ENCODE measurements at regions of chr11 and their contacts with region 1.

Region 1: GRCh38 chr11:12043959-12044819 is 35.8 kb upstream of the DKK3 start:
- DNase-seq: peak; percentile 86 to 90
- H3K4me3 ChIP-seq: peak overlapping the region in 1 of 2 donors; percentile 1
- H3K27ac ChIP-seq: peak overlapping the region; percentile 63 to 91
- H3K4me1 ChIP-seq: no peaks in the 10 kb centered on the region
- H3K27me3 ChIP-seq: no peaks in the 10 kb centered on the region
- CTCF ChIP-seq: peak; percentile 89 to 96 (median 95)
- POLR2A ChIP-seq: no peak

Region 2: GRCh38 chr11:10255388-10256125 is 1788.6 kb before region 1 on chr11:
- intact Hi-C with region 1: no loop called
- DNase-seq: no peak
- H3K4me3 ChIP-seq: no peak overlapping the region
- H3K27ac ChIP-seq: no peak overlapping the region
- H3K4me1 ChIP-seq: no peaks in the 10 kb centered on the region
- H3K27me3 ChIP-seq: no peaks in the 10 kb centered on the region
- CTCF ChIP-seq: no peak
- POLR2A ChIP-seq: no peak

Region 3: GRCh38 chr11:11806586-11806985 is 237.6 kb before region 1 on chr11:
- intact Hi-C with region 1: loop called (anchors 10 kb)
- DNase-seq: no peak
- H3K4me3 ChIP-seq: no peak overlapping the region
- H3K27ac ChIP-seq: no peak overlapping the region
- H3K4me1 ChIP-seq: no peaks in the 10 kb centered on the region
- H3K27me3 ChIP-seq: no peaks in the 10 kb centered on the region
- CTCF ChIP-seq: no peak
- POLR2A ChIP-seq: no peak

Region 4: DNA sequence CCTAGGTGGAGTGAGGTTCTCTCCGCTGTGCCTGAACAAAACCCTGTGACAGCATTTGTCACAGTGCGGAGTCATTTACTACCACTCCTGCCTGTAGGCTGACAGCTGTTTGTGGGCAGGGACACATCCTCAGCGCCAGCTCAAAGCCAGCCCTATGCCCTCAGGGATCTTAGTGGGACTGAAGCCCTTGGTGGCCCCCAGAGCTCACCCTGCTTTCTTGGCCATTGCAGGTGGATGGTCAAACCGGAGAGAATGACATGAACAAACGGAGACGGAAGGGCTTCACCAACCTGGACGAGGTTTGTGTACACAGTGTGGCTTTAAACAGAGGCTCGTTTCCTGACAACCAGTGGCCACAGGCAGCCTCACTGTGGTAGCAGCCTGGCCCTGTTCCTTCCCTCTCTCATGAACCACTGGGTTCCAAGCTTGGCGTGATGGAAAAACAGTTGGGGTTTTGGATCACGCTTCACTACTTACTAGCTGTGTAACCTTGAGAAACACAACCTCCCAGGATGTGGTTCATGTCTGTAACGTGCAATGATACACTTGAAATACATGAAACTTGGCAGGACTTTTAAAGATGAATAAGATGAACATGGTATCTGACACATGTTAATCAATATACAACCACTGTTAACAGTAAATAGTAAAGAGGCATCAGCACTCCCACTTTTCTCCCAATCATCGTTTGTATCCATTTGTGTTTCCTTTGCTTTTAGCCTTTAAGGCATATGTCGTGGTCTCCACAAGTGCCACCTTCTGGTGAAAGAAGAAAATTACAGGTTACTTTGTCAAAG is 192.0 kb after region 1 on chr11:
- intact Hi-C with region 1: loop called (anchors 5 kb)
- DNase-seq: no peak
- H3K4me3 ChIP-seq: no peak overlapping the region
- H3K27ac ChIP-seq: peak overlapping the region; percentile 71 to 77
- H3K4me1 ChIP-seq: no peaks in the 10 kb centered on the region
- H3K27me3 ChIP-seq: no peaks in the 10 kb centered on the region
- CTCF ChIP-seq: peak; percentile 50 to 79 (median 70)
- POLR2A ChIP-seq: no peak

Region 5: DNA sequence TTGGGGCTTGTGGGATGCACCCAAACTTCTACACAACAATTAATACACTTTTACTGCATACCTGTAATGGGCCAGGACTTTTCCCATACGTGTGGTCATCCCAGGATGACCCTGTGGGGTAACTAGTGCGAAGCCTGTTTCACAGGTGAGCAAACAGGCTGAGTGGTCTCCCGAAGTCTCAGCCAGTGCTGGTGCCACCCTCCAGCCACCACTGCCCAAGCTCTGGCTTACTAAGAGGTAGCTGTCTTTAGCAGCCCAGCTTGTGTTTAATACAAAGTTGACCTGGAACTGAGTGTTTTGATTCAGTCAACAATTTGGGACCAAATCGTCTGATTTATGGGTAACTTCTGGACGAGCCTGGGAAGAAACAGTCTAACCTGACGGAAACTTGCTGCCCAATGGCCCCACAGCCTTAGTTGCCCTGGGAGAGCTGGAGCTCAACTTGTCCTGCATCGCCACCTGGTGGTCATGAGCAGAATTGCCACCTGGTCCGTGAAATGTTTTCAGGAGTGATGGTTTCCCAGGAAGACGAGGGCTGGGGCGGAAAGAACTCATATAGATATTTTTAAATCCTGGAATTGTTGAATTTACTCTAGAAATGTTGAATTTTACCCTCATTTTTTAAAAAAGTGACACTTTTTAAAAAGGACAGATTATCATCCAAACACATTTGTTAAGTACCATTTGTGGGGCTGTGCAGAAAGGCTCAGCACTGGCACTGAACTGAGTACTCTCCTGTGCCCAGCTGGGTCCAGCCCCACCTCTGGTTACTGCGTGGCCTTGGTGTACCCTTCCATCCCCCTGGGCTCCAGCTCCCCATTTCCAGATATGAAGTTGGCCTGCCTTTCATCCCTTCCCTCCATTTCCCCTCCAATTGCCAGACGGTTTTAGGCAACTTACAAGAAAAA is 237.6 kb after region 1 on chr11:
- intact Hi-C with region 1: loop called (anchors 2 kb)
- DNase-seq: peak; percentile 86 to 87
- H3K4me3 ChIP-seq: no peak overlapping the region
- H3K27ac ChIP-seq: no peak overlapping the region
- H3K4me1 ChIP-seq: peaks cover 0 to 5% of the 10 kb centered on the region in 2 donors
- H3K27me3 ChIP-seq: no peaks in the 10 kb centered on the region
- CTCF ChIP-seq: peak; percentile 95 to 99 (median 98)
- POLR2A ChIP-seq: no peak

Region 6: GRCh38 chr11:12430955-12431354 is 386.8 kb after region 1 on chr11:
- intact Hi-C with region 1: no loop called
- DNase-seq: peak; percentile 85 to 95
- H3K4me3 ChIP-seq: no peak overlapping the region
- H3K27ac ChIP-seq: peak overlapping the region; percentile 87 to 96
- H3K4me1 ChIP-seq: peaks cover 4 to 7% of the 10 kb centered on the region in 2 donors
- H3K27me3 ChIP-seq: no peaks in the 10 kb centered on the region
- CTCF ChIP-seq: peak in 1 of 4 experiments; percentile 5
- POLR2A ChIP-seq: peak in 1 of 2 donors; percentile 32

Region 7: DNA sequence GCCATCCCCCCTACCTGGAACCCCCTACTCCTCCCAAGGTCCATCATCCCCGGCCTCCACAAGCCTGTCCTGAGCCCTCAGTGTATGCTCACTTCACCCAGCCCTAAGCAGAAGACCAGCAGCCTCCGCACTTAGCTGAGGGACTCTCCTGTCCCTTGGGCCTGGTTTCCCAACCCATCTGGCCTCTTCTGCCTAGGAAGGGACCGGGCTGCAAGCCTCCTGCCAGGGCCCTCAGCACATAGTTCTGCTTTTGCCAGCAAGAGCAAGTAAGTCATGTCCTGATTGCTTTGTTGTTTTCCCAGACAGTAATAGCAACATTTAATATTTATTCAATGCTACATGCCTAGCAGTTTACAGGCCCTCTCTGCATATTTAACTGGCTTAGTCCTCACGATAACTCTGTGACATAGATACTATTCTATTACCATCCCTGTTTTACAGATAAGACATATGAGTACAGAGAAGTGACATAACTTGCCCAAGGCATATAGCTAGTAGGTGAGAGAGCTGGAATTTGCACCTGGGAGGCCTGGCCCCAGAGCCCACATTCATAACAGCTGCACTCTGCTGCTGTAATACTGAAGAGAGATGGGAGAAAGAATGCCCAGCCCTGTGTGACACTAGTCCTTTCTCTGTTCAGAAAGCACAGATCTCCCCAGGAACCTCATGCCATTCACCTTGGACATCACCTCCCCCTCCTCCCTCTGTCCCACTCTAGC is 472.4 kb after region 1 on chr11:
- intact Hi-C with region 1: no loop called
- DNase-seq: no peak
- H3K4me3 ChIP-seq: no peak overlapping the region
- H3K27ac ChIP-seq: no peak overlapping the region
- H3K4me1 ChIP-seq: no peaks in the 10 kb centered on the region
- H3K27me3 ChIP-seq: no peaks in the 10 kb centered on the region
- CTCF ChIP-seq: no peak
- POLR2A ChIP-seq: no peak

Measured in uterus (tissue), 4 donors.